ENCODE measurements at regions of chr2 and their contacts with region 1.

Region 1: DNA sequence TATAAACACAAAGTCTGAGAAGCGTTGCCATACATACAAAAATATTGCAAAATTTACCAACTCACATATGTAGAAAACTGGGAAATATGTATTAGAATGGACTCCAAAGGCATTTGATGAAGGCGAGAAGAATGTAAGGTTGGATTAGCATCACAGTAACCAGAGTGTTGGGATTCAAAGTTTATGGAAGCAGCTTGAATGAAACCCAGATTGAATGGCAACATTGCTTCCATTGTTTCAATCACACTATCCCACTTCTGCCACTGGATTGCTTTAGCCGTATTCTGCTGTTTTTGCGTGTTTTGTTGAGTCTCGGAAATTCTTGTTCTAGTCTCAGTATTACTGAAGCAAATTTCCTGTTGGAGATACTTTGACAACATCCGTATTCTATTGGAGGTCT is 609.0 kb upstream of the LRATD1 start:
- DNase-seq: no peak
- ATAC-seq: no peak
- H3K4me3 ChIP-seq: no peak overlapping the region
- H3K4me3 Mint-ChIP-seq: no peak overlapping the region
- H3K27ac ChIP-seq: no peak overlapping the region
- H3K27ac Mint-ChIP-seq: no peak overlapping the region
- H3K4me1 ChIP-seq: no peaks in the 10 kb centered on the region
- H3K4me1 Mint-ChIP-seq: no peaks in the 10 kb centered on the region
- H3K27me3 ChIP-seq: no peaks in the 10 kb centered on the region
- H3K27me3 Mint-ChIP-seq: no peaks in the 10 kb centered on the region

Region 2: GRCh38 chr2:14256890-14257289 is 233.3 kb after region 1 on chr2:
- CTCF ChIA-PET with region 1: no interaction called
- POLR2A ChIA-PET with region 1: no interaction called
- intact Hi-C with region 1: loop called in 1 of 2 experiments (anchors 5 kb)
- DNase-seq: no peak
- ATAC-seq: no peak
- H3K4me3 ChIP-seq: no peak overlapping the region
- H3K4me3 Mint-ChIP-seq: no peak overlapping the region
- H3K27ac ChIP-seq: no peak overlapping the region
- H3K27ac Mint-ChIP-seq: no peak overlapping the region
- H3K4me1 ChIP-seq: no peaks in the 10 kb centered on the region
- H3K4me1 Mint-ChIP-seq: no peaks in the 10 kb centered on the region
- H3K27me3 ChIP-seq: no peaks in the 10 kb centered on the region
- H3K27me3 Mint-ChIP-seq: no peaks in the 10 kb centered on the region

Measured in naive thymus-derived CD4-positive, alpha-beta T cell (primary cell).